Uterus (tissue), 4 donors: ENCODE measurements at regions of chr12 and their contacts with region 1.

Region 1: DNA sequence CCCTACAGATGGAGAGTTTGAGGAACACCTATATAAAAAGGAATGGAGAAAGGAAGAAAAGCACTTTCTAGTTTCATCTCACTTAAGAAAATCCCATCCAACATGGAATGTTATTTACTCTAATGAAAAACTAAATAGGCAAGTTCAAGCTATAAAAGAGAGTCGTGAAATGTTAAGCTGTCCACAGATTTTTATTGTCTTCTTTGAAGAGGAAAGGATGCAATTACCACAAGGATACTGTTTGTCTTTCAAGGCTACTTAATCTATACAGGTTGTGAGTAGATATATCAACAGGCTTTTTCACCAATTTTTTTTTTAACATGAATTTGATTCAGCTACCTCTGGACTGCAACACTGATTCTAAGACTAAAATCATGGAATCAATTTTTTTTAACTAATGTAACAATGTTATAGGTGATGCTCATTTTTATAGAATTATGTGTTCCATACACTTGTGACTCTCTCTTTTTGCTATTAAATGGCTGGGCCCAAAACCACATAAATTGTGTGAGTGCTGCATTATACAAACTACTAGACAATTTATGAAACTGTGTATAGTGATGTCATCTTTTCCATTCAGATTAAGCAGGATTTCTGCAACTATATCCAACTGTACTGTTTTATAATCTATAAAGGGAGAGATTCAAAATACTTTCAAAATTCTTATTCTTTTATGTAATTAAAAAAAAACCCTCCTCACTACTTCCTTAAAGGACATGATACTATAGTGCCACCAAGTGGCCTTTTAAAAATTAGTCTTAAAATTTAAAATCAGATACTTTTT is 26.8 kb upstream of the BMAL2 start:
- DNase-seq: no peak
- H3K4me3 ChIP-seq: no peak overlapping the region
- H3K27ac ChIP-seq: peak overlapping the region; percentile 17 to 71
- H3K4me1 ChIP-seq: no peaks in the 10 kb centered on the region
- H3K27me3 ChIP-seq: no peaks in the 10 kb centered on the region
- CTCF ChIP-seq: peak; percentile 23 to 79 (median 50)
- POLR2A ChIP-seq: no peak

Region 2: DNA sequence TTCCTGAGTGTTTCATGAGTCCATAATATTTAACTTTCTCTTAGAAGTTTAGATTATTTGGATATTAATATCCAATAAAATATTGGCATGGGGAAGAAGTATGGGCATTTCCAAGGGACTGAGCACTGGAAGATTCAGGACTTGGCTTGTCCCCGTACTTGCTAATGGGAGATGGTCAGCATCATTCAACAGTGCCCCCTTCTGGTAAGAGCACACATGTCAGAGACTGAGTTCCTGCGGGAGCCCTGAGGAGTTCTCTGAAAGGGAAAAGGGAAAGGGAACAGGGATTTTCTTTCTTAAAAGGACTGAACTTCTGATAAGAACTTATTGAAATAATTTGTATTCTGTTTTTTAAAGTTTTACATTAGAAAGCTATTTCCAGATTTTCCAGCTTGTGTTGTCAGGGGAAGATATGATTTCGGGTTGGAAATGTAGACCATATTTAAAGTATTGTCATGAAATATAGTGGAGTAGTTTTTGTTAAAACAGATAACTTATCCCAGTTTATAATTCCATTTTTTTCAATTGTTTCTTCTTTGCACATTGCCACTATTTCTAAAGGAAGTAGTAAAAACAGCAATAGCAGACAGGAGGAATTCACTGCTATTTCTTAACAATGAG is 163.7 kb before region 1 on chr12:
- intact Hi-C with region 1: loop called (anchors 10 kb)
- DNase-seq: peak; percentile 30 to 57
- H3K4me3 ChIP-seq: no peak overlapping the region
- H3K27ac ChIP-seq: no peak overlapping the region
- H3K4me1 ChIP-seq: no peaks in the 10 kb centered on the region
- H3K27me3 ChIP-seq: no peaks in the 10 kb centered on the region
- CTCF ChIP-seq: peak; percentile 51 to 70 (median 61)
- POLR2A ChIP-seq: no peak